ENCODE measurements at regions of chrX and their contacts with region 1.

Region 1: GRCh38 chrX:50941638-50942037 is 31.1 kb downstream of the BMP15 start:
- DNase-seq: no peak
- ATAC-seq: no peak
- H3K4me3 ChIP-seq: no peak overlapping the region
- H3K27ac ChIP-seq: no peak overlapping the region
- H3K4me1 ChIP-seq: no peaks in the 10 kb centered on the region
- H3K27me3 ChIP-seq: peaks cover 0 to 72% (median 0%) of the 10 kb centered on the region in 7 donors
- CTCF ChIP-seq: peak in 6 of 9 donors; percentile 11 to 36 (median 20)

Region 2: DNA sequence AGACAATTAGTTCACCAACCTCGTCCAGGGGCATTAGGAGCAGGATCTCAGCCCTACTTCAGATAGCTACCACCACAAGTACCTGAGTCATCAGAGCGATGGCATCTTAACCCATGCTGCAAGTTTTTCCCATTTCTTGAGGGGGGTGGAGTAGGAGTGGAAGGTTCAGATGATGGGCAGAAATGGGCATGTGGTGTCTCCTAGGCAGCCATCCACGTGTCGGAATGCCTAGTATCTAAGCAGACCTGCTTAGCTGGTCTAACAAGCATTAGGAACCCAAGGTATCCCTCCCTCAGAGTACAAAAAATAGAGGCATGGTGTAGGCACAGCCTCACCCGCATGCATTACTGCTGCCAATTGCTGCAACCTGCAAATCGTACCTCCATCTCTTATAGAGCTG is 311.9 kb before region 1 on chrX:
- intact Hi-C with region 1: no loop called
- DNase-seq: no peak
- ATAC-seq: no peak
- H3K4me3 ChIP-seq: no peak overlapping the region
- H3K27ac ChIP-seq: no peak overlapping the region
- H3K4me1 ChIP-seq: peaks cover 0 to 34% (median 8%) of the 10 kb centered on the region in 9 donors
- H3K27me3 ChIP-seq: peaks cover 0 to 4% (median 0%) of the 10 kb centered on the region in 7 donors
- CTCF ChIP-seq: no peak

Region 3: DNA sequence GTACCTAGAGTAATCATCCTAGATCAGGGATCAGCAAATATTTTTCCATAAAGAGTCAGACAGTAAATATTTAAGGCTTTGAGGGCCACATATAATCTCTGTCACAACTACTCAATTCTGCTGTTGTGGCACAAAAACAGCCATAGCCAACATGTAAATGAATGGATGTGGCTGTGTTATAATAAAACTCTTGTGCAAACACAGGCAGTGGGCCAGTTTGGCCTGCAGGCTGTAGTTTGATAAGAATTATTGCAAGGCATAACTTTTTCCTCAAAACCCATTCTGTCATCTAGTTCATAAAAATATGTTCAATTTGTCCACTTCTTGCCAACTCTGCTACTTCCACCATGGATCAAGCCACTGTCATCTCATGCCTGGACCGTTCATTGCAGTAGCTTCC is 88.2 kb before region 1 on chrX:
- intact Hi-C with region 1: no loop called
- DNase-seq: no peak
- ATAC-seq: no peak
- H3K4me3 ChIP-seq: no peak overlapping the region
- H3K27ac ChIP-seq: no peak overlapping the region
- H3K4me1 ChIP-seq: no peaks in the 10 kb centered on the region
- H3K27me3 ChIP-seq: no peaks in the 10 kb centered on the region
- CTCF ChIP-seq: no peak

Region 4: GRCh38 chrX:50913520-50913919 is 28.1 kb before region 1 on chrX:
- intact Hi-C with region 1: loop called in 1 of 10 experiments (anchors 1 kb)
- DNase-seq: peak in 1 of 2 donors; percentile 8
- ATAC-seq: peak in 5 of 8 donors; percentile 54 to 86 (median 72)
- H3K4me3 ChIP-seq: no peak overlapping the region
- H3K27ac ChIP-seq: peak overlapping the region in 1 of 10 donors; percentile 36
- H3K4me1 ChIP-seq: no peaks in the 10 kb centered on the region
- H3K27me3 ChIP-seq: peaks cover 0 to 23% (median 0%) of the 10 kb centered on the region in 7 donors
- CTCF ChIP-seq: no peak

Measured in heart right ventricle (tissue), 16 donors.